Activated CD4-positive, alpha-beta memory T cell treated with anti-CD3 and anti-CD28 coated beads, Interleukin-2, amount 10 ng/mL, durations not matched to agents 7 days and 5 days (primary cell): ENCODE measurements at regions of chr22 and their contacts with region 1.

Region 1: GRCh38 chr22:39170825-39171622 is 18.5 kb upstream of the CBX7 start:
- DNase-seq: peak; percentile 86
- H3K4me3 Mint-ChIP-seq: peak overlapping the region; percentile 44
- H3K27ac Mint-ChIP-seq: no peak overlapping the region
- H3K4me1 Mint-ChIP-seq: peaks cover 37% of the 10 kb centered on the region
- H3K27me3 Mint-ChIP-seq: peaks cover 26% of the 10 kb centered on the region

Region 2: DNA sequence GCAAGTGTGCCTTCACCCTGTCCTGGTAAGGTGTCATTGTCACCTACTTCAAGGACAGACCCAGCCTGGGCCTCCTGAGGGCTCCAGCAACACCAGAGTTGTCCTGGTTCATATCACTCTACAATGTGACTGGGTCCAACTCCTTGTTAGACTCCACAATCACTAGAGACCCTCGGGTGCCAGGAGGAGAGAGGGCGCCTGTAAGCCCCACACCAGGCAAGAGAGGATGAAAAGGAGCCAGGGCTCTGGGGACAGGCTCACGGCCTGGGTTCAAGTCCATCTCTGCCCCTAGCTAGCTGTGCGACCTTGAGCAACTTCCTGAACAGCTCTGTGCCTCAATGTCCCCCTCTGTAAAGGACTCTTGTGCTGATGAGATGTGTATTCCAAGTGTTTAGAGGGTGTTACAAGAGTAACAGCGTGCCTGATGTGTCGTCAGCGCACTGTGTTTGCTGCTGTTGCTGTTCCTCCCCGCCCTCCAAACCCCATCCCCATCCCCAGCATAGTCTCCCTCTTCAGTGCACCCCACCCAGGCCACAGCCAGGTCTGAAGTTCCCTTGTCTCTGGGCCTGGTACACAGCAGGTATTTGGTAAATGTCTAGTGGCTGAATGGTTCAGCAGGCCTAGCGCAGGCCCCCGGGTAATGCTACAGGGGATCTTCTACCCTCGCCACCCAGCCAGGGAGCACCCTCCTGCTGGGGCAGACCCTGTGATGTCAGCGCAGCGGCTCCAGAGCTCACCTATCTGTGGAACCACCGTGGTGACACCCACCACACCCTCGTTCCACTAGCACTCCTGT is 29.0 kb before region 1 on chr22:
- CTCF ChIA-PET with region 1: no interaction called
- POLR2A ChIA-PET with region 1: no interaction called
- DNase-seq: no peak
- H3K4me3 Mint-ChIP-seq: no peak overlapping the region
- H3K27ac Mint-ChIP-seq: no peak overlapping the region
- H3K4me1 Mint-ChIP-seq: peaks cover 20% of the 10 kb centered on the region
- H3K27me3 Mint-ChIP-seq: no peaks in the 10 kb centered on the region

Region 3: DNA sequence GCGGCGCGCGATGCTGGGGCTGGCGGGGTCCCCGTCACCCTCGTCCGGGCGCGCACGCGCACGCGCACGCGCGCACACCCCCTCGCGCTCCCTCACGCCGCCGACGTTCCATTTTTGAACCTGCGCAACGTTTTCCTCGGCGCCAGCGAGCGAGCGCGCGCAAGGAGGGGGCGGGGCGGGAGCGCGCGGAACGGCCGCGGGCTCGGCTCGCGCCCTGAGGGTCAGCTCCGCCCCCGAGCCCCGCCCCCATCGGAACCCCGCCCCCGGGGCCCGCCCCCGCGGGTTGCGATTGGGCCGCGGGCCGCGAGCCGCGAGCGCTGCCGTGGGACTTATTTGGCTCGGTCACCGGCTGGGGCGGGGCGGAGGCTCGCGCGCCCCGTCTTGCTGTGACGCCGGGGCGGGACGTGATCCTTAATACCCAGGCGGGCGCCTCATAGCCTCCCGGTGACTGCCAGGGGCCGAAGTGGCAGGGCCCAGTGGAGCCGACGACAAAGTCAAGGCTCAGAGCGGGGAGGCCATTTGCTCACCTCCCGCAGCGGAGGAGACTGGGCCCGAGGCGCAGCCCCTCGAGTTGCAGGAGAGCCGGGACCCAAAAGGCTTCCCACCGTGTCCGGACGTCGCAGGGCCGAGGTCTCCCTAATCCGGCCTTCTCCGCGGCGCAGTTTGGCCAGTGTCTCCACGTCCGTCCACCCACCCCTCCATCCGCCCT is 18.4 kb before region 1 on chr22 and contains the start of gene CBX7:
- CTCF ChIA-PET with region 1: interaction called, 20 read pairs
- POLR2A ChIA-PET with region 1: interaction called, 4 read pairs
- DNase-seq: peak; percentile 97
- H3K4me3 Mint-ChIP-seq: peak within 1 kb of the TSS; percentile 78
- H3K27ac Mint-ChIP-seq: peak within 1 kb of the TSS; percentile 58
- H3K4me1 Mint-ChIP-seq: peaks cover 46% of the 10 kb centered on the region
- H3K27me3 Mint-ChIP-seq: peaks cover 30% of the 10 kb centered on the region
- total RNA-seq, gene CBX7: 24.9 to 25.0 TPM

Region 4: DNA sequence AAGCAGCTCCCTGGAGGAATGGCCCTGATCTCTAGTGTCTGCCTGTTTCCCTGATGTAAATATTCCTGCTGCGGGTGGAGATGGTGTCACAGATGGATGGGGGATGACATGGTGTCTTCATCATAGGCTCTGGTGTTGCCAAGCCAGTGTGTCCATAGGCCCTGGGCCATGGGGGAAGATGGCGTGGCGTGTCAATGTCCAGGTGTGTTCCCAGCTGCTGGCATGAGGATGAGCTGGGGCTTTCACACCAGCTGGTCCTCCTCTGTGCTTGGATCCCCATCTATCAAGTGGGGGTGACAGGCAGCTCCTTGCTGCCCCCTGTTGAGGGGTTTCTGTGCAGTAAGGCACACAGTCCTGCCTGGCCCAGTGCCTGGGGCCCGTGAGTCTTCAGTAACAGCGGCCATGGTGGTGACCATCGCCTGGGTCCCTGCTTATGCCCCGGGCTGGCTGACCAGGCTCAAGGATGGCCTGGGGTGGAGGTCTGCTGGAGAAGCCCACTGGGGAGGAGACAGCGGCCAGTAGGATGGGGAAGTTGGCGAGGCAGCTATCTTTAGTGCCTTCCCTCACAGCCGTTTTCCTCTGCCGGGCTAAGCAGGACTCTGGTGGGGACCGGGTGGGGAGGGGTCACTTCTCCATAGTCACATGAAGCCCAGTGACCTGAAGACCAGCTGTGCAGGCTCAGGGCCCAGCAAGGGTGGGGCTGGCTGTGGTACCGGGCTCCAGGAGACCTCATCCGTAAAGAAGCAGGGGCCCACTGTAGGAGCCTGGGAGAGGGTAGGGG is 135.7 kb after region 1 on chr22:
- CTCF ChIA-PET with region 1: interaction called, 74 read pairs
- POLR2A ChIA-PET with region 1: interaction called, 13 read pairs
- DNase-seq: peak; percentile 65
- H3K4me3 Mint-ChIP-seq: no peak overlapping the region
- H3K27ac Mint-ChIP-seq: no peak overlapping the region
- H3K4me1 Mint-ChIP-seq: peaks cover 18% of the 10 kb centered on the region
- H3K27me3 Mint-ChIP-seq: no peaks in the 10 kb centered on the region

Region 5: DNA sequence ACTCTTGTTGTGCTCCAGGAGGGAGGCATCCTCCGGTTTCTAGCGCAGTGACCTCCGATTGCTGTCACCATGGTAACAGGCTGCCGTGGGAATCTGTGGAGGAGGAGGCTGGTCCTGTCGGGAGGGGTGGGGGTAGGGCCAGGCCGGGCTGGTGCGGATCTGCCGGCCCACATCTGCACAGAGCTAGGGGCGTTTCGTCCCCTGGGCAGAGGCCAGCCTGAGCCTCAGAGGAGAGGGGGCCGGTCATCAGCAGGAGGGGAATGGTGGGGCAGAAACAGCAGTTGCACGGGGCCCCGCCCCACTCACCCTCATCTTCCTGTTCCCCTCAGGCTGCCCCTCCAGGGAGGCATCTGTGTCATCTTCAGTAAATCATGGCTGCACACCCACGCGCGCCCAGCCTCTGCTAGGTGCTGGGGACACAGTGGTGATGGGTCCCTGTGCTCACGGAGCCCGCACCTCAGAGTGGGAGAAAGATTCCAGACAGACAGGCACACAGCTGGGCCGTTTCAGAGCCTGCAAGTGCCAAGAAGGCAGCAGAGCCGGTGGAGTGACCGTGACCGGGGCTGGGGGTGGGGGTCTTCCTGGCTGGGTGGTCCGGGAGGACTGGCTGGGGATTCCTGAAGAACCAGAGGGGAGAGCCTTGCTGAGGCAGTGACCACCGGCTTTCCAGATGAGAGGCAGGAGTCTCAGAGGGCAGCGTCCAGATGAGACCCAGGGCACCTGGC is 520.0 kb after region 1 on chr22:
- CTCF ChIA-PET with region 1: no interaction called
- POLR2A ChIA-PET with region 1: no interaction called
- DNase-seq: no peak
- H3K4me3 Mint-ChIP-seq: no peak overlapping the region
- H3K27ac Mint-ChIP-seq: no peak overlapping the region
- H3K4me1 Mint-ChIP-seq: no peaks in the 10 kb centered on the region
- H3K27me3 Mint-ChIP-seq: peaks cover 32% of the 10 kb centered on the region